ENCODE measurements at regions of chr19 and their contacts with region 1.

Region 1: DNA sequence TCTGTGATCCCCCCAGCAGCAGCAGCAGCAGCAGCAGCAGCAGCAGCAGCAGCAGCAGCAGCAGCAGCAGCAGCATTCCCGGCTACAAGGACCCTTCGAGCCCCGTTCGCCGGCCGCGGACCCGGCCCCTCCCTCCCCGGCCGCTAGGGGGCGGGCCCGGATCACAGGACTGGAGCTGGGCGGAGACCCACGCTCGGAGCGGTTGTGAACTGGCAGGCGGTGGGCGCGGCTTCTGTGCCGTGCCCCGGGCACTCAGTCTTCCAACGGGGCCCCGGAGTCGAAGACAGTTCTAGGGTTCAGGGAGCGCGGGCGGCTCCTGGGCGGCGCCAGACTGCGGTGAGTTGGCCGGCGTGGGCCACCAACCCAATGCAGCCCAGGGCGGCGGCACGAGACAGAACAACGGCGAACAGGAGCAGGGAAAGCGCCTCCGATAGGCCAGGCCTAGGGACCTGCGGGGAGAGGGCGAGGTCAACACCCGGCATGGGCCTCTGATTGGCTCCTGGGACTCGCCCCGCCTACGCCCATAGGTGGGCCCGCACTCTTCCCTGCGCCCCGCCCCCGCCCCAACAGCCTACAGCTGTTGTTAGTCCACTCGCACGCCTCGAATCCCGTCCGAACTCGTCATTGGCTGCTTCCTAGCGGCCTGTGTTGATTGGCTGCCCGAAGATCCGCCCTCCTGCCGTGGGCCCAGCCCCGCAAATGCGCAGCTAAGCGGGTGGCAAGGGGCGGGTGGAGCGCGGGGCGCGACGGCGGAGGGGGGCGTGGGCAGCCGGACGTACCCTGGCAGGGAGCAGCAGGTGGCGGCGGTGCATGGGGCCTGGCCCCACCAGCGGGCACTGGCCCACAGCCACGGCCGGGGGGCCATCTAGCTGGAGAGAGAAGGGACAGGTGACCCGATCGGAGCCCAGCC is 1.4 kb upstream of the SIX5 start:
- DNase-seq: peak; percentile 79 to 92
- H3K4me3 ChIP-seq: peak overlapping the region; percentile 58
- H3K27ac ChIP-seq: 0 out of 2 replicates have a peak overlapping the region, but pooled peaks have one; percentile 6
- H3K4me1 ChIP-seq: peaks cover 17% of the 10 kb centered on the region
- H3K27me3 ChIP-seq: no peaks in the 10 kb centered on the region
- CTCF ChIP-seq: peak; percentile 99

Region 2: GRCh38 chr19:45385392-45386221 is 384.8 kb before region 1 on chr19:
- CTCF ChIA-PET with region 1: no interaction called
- POLR2A ChIA-PET with region 1: no interaction called
- intact Hi-C with region 1: no loop called
- DNase-seq: no peak
- H3K4me3 ChIP-seq: no peak overlapping the region
- H3K27ac ChIP-seq: no peak overlapping the region
- H3K4me1 ChIP-seq: no peaks in the 10 kb centered on the region
- H3K27me3 ChIP-seq: no peaks in the 10 kb centered on the region
- CTCF ChIP-seq: no peak

Region 3: DNA sequence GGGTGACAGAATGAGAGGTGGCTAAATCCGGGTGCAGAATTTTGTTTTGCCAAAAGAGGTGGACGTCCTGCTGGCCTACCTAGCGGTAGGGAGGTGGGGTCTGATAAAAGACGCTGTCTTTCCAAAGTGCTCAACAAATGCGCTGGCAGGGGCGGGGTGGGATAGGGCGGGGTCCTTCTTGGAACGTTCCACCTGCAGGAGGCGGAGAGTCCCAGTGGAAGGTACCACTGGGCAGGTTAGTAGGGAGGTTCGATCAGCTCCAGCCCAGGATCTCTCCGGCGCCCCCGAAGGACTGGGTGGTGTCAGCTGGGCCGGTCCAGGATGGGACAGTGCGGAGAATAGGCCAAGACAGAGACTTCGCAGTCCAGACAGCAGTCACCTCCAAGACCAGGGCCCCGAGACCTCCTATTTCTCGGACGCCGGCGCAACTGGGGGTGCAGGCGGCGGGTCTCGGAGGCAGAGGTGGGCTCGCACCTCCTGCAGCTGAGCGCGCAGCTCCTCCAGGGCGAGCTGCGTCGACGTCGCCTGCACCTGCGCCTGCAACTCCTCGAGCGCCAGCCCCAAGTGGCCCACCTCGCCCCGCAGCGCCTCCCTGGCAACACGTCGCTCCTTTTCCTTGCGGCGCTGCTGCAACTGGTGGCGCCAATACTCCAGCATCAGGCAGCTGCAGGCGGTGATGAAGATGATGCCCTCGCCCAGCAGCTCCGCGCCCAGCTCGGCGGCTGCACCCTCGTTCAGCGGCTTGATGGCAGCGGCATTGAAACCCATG is 241.6 kb before region 1 on chr19:
- CTCF ChIA-PET with region 1: no interaction called
- POLR2A ChIA-PET with region 1: interaction called, 16 read pairs
- intact Hi-C with region 1: no loop called
- DNase-seq: peak; percentile 82 to 85
- H3K4me3 ChIP-seq: peak overlapping the region; percentile 80
- H3K27ac ChIP-seq: peak overlapping the region; percentile 88
- H3K4me1 ChIP-seq: peaks cover 24% of the 10 kb centered on the region
- H3K27me3 ChIP-seq: no peaks in the 10 kb centered on the region
- CTCF ChIP-seq: peak; percentile 34; the same call in 1 of the 2 replicates

Region 4: DNA sequence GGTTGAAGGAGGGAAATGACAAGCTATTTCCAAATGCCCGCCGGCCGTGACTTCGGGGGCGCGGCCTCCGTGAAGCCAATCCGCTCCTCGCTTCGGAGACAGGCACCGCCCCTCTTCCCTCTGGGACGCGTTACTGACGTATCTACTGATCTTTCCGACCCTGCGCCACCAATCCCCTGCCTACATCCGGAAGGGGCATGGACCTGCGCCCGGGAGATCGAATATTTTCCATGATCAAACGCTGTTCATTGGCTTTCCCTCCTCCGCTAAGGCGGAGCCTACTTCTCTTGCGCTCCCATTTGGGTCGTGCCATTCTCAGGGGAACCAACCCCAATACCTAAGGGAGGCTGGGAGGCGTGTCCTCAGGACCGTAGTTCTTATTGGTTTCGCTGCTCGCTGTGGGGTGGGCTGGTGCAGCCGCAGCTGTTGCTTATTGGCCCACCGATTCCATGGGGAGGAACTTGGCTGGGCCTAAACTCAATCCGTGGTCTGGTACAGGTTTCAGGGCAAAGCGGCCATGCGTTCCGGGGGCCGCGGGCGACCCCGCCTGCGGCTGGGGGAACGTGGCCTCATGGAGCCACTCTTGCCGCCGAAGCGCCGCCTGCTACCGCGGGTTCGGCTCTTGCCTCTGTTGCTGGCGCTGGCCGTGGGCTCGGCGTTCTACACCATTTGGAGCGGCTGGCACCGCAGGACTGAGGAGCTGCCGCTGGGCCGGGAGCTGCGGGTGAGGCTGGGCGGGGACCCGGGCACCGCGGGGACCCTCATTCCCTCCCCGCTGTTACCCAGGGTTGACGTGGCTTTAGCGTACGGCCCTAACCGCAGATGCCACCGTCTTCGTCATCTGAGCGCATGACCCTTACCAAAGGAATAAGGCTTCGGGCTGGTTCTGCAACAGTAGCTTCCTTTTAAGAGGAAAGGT is 78.0 kb before region 1 on chr19 and contains the start of gene QPCTL:
- CTCF ChIA-PET with region 1: interaction called, 10 read pairs
- POLR2A ChIA-PET with region 1: interaction called, 13 read pairs
- intact Hi-C with region 1: loop called (anchors 1 kb)
- DNase-seq: peak; percentile 97 to 100
- H3K4me3 ChIP-seq: peak within 1 kb of the TSS; percentile 80
- H3K27ac ChIP-seq: peak within 1 kb of the TSS; percentile 72
- H3K4me1 ChIP-seq: peaks cover 11% of the 10 kb centered on the region
- H3K27me3 ChIP-seq: no peaks in the 10 kb centered on the region
- CTCF ChIP-seq: no peak
- total RNA-seq, gene QPCTL: 27.6 and 42.8 TPM in 2 replicates

Region 5: DNA sequence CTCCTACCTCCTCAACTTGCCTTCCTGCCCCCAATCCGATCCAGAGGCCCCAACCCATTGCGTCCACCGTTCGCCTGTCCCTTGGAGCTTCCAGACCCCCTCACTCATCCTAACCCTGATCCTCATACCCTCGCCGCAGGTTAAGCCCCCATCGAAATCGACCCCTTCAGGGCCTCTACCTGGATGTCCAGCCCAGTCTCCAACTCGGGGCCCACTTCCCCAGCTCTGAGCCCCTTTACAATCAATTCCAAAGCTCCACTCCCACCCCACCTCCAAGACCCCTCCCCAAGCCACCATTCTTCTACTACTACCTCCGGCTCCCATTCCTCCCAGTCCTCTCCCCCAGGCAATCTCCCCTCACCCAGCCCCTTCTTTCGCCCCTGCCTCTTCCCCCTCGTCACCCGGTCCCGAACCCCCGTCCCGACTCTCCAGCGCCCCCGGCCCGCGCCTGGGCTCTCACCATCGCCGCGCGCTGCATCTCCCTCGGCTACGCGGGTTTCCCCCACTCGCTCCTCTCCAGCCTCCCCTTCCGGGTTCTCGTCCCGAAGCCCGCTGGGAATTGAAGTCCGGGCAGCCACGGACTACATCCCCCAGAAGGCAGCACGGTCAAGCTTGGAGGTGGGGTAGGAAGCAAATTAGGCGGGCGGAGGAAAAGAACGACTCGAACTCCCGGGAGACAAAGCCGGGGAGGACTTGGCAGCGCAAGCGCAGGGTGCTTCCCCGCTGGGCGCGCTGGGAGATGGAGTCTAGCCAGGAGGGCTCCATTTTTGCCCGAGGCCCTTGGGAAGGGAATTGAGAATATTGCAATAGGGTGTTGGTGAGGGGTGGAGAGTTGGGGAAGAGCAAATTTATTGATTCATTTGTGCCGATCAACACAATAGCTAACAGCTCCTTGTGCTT is 39.8 kb before region 1 on chr19 and contains the start of gene FBXO46:
- CTCF ChIA-PET with region 1: interaction called, 12 read pairs
- POLR2A ChIA-PET with region 1: interaction called, 4 read pairs
- intact Hi-C with region 1: loop called (anchors 2 kb)
- DNase-seq: peak; percentile 94 to 97
- H3K4me3 ChIP-seq: peak within 1 kb of the TSS; percentile 93
- H3K27ac ChIP-seq: peak within 1 kb of the TSS; percentile 46
- H3K4me1 ChIP-seq: peaks cover 9% of the 10 kb centered on the region
- H3K27me3 ChIP-seq: no peaks in the 10 kb centered on the region
- CTCF ChIP-seq: no peak; the same call in 1 of the 2 replicates
- total RNA-seq, gene FBXO46: 33.3 and 45.5 TPM in 2 replicates

Region 6: DNA sequence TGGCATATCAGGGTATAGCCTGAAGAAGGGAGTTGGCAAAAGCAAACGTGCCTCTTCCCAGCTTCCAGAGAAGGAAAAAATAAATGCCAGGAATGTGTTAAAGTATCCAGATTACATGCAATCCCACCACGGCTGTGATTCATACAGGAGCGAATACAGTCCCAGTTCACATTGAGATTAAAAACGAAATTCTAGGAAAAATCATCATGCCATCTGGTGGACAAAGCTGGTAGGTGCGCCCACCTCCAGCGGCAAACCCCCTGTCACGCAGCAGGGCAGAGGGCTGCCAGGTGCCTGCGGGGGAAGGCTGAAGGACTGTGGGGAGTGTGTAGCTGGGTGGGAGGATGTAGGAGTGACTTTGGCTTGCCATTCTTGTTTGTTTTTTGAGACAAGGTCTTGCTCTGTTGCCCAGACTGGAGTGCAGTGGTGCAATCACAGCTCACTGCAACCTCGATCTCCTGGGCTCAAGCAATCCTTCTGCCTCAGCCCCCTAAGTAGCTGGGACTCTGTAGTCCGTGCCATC is 28.6 kb after region 1 on chr19:
- CTCF ChIA-PET with region 1: interaction called, 6 read pairs
- POLR2A ChIA-PET with region 1: interaction called, 10 read pairs
- intact Hi-C with region 1: loop called (anchors 1 kb)
- DNase-seq: peak; percentile 58 to 75
- H3K4me3 ChIP-seq: no peak overlapping the region
- H3K27ac ChIP-seq: 0 out of 2 replicates have a peak overlapping the region, but pooled peaks have one; percentile 1
- H3K4me1 ChIP-seq: peaks cover 13% of the 10 kb centered on the region
- H3K27me3 ChIP-seq: no peaks in the 10 kb centered on the region
- CTCF ChIP-seq: peak; percentile 95

Region 7: GRCh38 chr19:45886427-45887199 is 116.2 kb after region 1 on chr19:
- CTCF ChIA-PET with region 1: no interaction called
- POLR2A ChIA-PET with region 1: interaction called, 4 read pairs
- intact Hi-C with region 1: loop called (anchors 5 kb)
- DNase-seq: peak; percentile 85 to 89
- H3K4me3 ChIP-seq: peak overlapping the region; percentile 75
- H3K27ac ChIP-seq: peak overlapping the region; percentile 62
- H3K4me1 ChIP-seq: peaks cover 18% of the 10 kb centered on the region
- H3K27me3 ChIP-seq: no peaks in the 10 kb centered on the region
- CTCF ChIP-seq: 0 out of 2 replicates have a peak, but pooled peaks have one; percentile 2